Activated CD4-positive, alpha-beta T cell treated with anti-CD3 and anti-CD28 coated beads, Interleukin-2, amount 10 ng/mL, durations not matched to agents 24 days and 14 days (primary cell): ENCODE measurements at regions of chr14 and their contacts with region 1.

Region 1: GRCh38 chr14:56474419-56475022 is 105.1 kb upstream of the TMEM260 start:
- DNase-seq: peak; percentile 76
- H3K4me3 Mint-ChIP-seq: no peak overlapping the region
- H3K27ac Mint-ChIP-seq: no peak overlapping the region
- H3K4me1 Mint-ChIP-seq: no peaks in the 10 kb centered on the region
- H3K27me3 Mint-ChIP-seq: peaks cover 8% of the 10 kb centered on the region

Region 2: DNA sequence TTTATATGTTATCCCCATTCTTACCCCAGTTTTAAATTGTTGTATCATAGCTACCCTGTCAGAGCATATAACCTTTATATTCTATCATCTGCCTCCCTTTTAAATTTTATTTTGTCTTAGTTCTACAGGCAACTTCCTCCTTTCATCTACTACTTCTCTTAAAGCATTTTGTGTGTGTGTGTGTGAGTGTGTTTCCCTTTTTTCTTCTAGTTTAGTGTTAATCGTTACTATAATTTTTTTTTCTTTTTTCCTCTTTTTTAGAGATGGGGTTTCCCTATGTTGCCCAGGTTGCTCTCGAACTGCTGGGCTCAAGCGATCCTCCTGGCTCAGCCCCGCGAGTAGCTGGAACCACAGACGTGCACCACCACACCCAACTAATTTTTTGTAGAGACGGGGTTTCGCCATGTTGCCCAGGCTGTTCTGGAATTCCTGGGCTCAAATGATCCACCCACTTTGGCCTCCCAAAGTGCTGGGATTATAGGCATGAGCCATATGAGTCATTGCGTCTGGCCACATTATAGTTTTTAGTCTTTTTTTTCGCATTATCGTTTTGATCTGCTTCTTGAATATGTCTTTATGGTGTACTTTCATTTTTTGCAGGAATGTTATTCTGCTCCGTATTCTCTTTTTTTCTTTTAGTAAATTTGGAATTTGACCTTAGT is 1236.4 kb before region 1 on chr14:
- intact Hi-C with region 1: loop called (anchors 10 kb)
- DNase-seq: no peak
- H3K4me3 Mint-ChIP-seq: no peak overlapping the region
- H3K27ac Mint-ChIP-seq: no peak overlapping the region
- H3K4me1 Mint-ChIP-seq: peaks cover 3% of the 10 kb centered on the region
- H3K27me3 Mint-ChIP-seq: peaks cover 42% of the 10 kb centered on the region

Region 3: GRCh38 chr14:55446218-55446654 is 1028.3 kb before region 1 on chr14:
- intact Hi-C with region 1: loop called (anchors 2 kb)
- DNase-seq: peak; percentile 87
- H3K4me3 Mint-ChIP-seq: no peak overlapping the region
- H3K27ac Mint-ChIP-seq: no peak overlapping the region
- H3K4me1 Mint-ChIP-seq: peaks cover 16% of the 10 kb centered on the region
- H3K27me3 Mint-ChIP-seq: no peaks in the 10 kb centered on the region

Region 4: DNA sequence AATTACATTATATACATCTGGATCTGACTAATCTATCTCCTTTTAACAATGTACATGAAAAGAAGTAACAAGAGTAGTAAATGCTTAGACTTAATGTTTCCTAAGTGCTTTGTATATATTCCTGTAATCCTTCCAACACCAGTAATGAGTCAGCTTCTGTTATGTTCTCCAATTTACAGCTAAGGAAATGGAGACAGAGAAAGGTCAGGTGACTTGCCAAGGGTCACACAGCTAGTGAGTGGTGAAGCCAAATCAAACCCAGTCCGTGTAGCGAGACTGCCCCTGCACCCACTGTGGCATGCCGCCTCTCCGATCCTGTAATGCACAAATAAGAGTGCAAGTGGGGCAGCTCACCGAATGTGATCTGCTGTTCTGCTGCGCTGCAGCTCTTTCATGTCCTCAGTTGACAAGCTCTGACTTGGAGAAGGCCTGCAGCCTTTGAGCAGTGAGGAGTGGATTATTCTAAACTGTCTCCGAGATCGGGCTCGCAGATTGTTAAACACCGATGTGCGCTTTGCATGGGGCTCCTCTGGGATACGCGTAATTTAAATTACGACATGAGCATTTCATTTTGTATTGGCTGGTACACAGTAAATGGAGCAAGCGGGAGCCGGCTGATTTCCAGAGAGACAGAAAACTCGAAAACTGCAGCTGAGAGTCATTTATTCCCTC is 959.6 kb before region 1 on chr14:
- intact Hi-C with region 1: no loop called
- DNase-seq: no peak
- H3K4me3 Mint-ChIP-seq: no peak overlapping the region
- H3K27ac Mint-ChIP-seq: no peak overlapping the region
- H3K4me1 Mint-ChIP-seq: no peaks in the 10 kb centered on the region
- H3K27me3 Mint-ChIP-seq: no peaks in the 10 kb centered on the region

Region 5: DNA sequence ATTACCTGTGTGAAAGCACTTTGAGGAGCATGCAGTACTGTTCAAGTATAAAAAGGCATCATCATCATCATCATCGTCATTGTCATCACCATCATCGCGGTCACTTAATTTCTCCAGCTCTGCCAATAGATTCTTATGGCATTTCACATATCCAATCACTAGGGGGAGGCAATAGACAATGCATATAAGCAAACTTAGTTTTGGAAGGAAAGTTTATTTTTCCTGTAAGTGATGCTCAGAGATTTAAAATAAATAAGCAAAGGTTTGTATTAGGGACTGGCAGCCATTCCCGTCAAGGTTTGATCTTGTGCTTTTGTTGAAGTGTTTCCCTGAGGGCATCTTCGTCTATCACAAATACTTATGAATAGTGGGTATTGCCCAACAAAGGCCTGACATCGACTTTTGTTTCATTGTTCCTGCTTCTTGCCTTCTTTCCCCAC is 767.1 kb before region 1 on chr14:
- intact Hi-C with region 1: loop called (anchors 10 kb)
- DNase-seq: no peak
- H3K4me3 Mint-ChIP-seq: no peak overlapping the region
- H3K27ac Mint-ChIP-seq: no peak overlapping the region
- H3K4me1 Mint-ChIP-seq: peaks cover 2% of the 10 kb centered on the region
- H3K27me3 Mint-ChIP-seq: no peaks in the 10 kb centered on the region

Region 6: GRCh38 chr14:55731881-55732498 is 742.5 kb before region 1 on chr14:
- intact Hi-C with region 1: loop called (anchors 10 kb)
- DNase-seq: peak; percentile 86
- H3K4me3 Mint-ChIP-seq: no peak overlapping the region
- H3K27ac Mint-ChIP-seq: no peak overlapping the region
- H3K4me1 Mint-ChIP-seq: peaks cover 15% of the 10 kb centered on the region
- H3K27me3 Mint-ChIP-seq: peaks cover 2% of the 10 kb centered on the region

Region 7: DNA sequence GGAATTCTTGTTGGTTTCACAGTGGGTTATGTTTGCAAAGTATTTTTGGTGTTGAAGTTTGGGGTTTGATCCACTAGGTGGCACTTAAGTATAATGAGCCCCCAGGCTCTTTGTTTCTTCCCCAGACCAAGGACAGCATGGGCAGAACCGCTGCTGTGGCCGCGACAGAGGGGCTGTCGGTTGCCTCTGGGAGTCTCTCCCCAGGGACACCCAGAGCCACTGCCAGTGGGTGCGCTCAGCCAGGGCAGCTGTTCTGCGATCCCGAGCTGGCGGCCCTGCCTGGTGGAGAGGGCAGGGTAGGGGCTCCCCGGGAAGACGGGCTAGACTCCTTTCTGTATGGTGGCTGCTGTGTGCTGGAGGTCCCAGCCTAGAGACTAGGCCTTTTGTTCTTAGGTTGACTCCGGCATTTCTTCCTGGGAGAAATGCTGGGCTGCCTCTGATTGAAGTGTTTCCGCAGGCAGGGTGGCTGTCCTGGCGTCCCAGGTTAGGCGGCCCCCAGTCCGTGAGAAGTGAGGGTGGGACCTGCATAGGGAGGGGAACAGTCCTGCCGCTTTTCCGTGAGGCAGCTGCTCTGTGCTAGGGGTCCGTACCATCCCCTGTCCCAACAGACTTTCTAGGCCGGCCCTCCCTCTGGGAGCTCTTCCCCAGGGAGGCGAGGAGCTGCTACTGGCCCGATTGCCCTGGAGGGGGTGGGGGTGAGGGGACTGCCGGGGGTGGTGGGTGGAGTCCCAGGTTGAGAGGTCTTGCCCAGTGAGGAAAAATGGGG is 609.4 kb before region 1 on chr14:
- intact Hi-C with region 1: loop called (anchors 10 kb)
- DNase-seq: peak; percentile 58
- H3K4me3 Mint-ChIP-seq: no peak overlapping the region
- H3K27ac Mint-ChIP-seq: no peak overlapping the region
- H3K4me1 Mint-ChIP-seq: peaks cover 5% of the 10 kb centered on the region
- H3K27me3 Mint-ChIP-seq: peaks cover 15% of the 10 kb centered on the region

Region 8: GRCh38 chr14:56491299-56492285 is 17.1 kb after region 1 on chr14:
- intact Hi-C with region 1: no loop called
- DNase-seq: peak; percentile 75
- H3K4me3 Mint-ChIP-seq: no peak overlapping the region
- H3K27ac Mint-ChIP-seq: no peak overlapping the region
- H3K4me1 Mint-ChIP-seq: peaks cover 6% of the 10 kb centered on the region
- H3K27me3 Mint-ChIP-seq: peaks cover 4% of the 10 kb centered on the region

Region 9: GRCh38 chr14:56501909-56502530 is 27.5 kb after region 1 on chr14:
- intact Hi-C with region 1: no loop called
- DNase-seq: no peak
- H3K4me3 Mint-ChIP-seq: no peak overlapping the region
- H3K27ac Mint-ChIP-seq: no peak overlapping the region
- H3K4me1 Mint-ChIP-seq: peaks cover 2% of the 10 kb centered on the region
- H3K27me3 Mint-ChIP-seq: peaks cover 15% of the 10 kb centered on the region